ENCODE measurements at regions of chr9 and their contacts with region 1.

Region 1: GRCh38 chr9:84808416-84808815 is 138.9 kb downstream of the NTRK2 start:
- DNase-seq: no peak
- ATAC-seq: no peak
- H3K4me3 ChIP-seq: no peak overlapping the region
- H3K27ac ChIP-seq: no peak overlapping the region
- H3K4me1 ChIP-seq: peaks cover 3% of the 10 kb centered on the region
- H3K27me3 ChIP-seq: no peaks in the 10 kb centered on the region

Region 2: DNA sequence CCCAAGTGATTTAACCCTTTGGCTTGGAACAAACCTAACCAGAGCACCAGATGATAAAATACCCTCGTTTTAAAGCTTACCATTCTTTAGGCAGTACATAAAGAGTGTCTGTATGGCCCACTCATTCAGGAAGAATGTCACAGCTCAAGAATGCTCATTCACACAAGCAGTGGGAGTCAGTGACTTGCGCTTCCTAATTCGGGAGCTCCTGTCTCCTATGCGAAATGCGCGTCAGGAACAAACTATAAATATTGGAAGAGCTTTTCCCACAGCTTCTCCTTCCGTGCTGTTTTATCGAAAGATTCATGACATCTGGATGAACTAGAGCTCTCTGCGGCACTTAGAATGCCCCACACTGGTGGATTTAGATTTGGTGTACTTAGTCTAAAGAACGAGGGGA is 72.3 kb before region 1 on chr9:
- intact Hi-C with region 1: no loop called
- DNase-seq: no peak
- ATAC-seq: no peak
- H3K4me3 ChIP-seq: no peak overlapping the region
- H3K27ac ChIP-seq: no peak overlapping the region
- H3K4me1 ChIP-seq: no peaks in the 10 kb centered on the region
- H3K27me3 ChIP-seq: no peaks in the 10 kb centered on the region

Region 3: GRCh38 chr9:84823421-84824271 is 15.2 kb after region 1 on chr9:
- intact Hi-C with region 1: loop called in 1 of 4 experiments (anchors 2 kb)
- DNase-seq: peak; percentile 26 to 61 (median 47)
- ATAC-seq: peak; percentile 83 to 84
- H3K4me3 ChIP-seq: no peak overlapping the region
- H3K27ac ChIP-seq: peak overlapping the region; percentile 34
- H3K4me1 ChIP-seq: no peaks in the 10 kb centered on the region
- H3K27me3 ChIP-seq: no peaks in the 10 kb centered on the region